ENCODE measurements at regions of chr11 and their contacts with region 1.

Region 1: GRCh38 chr11:34512840-34513681 is 533 bp downstream of the ELF5 start:
- DNase-seq: peak; percentile 74 to 81
- ATAC-seq: peak; percentile 92 to 99
- H3K4me3 ChIP-seq: no peak overlapping the region
- H3K27ac ChIP-seq: peak overlapping the region in 1 of 2 experiments; percentile 52; a peak in 3 of 6 replicates
- H3K4me1 ChIP-seq: no peaks in the 10 kb centered on the region
- CTCF ChIP-seq: peak; percentile 69
- EP300 ChIP-seq: no peak
- POLR2A ChIP-seq: no peak
- RAD21 ChIP-seq: peak; percentile 71 to 74

Region 2: GRCh38 chr11:33920838-33921613 is 592.0 kb before region 1 on chr11:
- CTCF ChIA-PET with region 1: no interaction called
- POLR2A ChIA-PET with region 1: no interaction called
- DNase-seq: no peak
- ATAC-seq: no peak
- H3K4me3 ChIP-seq: no peak overlapping the region
- H3K27ac ChIP-seq: no peak overlapping the region
- H3K4me1 ChIP-seq: no peaks in the 10 kb centered on the region
- CTCF ChIP-seq: no peak
- EP300 ChIP-seq: no peak
- POLR2A ChIP-seq: no peak
- RAD21 ChIP-seq: no peak

Region 3: GRCh38 chr11:34243726-34244464 is 269.2 kb before region 1 on chr11:
- CTCF ChIA-PET with region 1: no interaction called
- POLR2A ChIA-PET with region 1: no interaction called
- DNase-seq: peak; percentile 94
- ATAC-seq: peak; percentile 93 to 94
- H3K4me3 ChIP-seq: no peak overlapping the region
- H3K27ac ChIP-seq: peak overlapping the region; percentile 80 to 92
- H3K4me1 ChIP-seq: peaks cover 75% of the 10 kb centered on the region
- CTCF ChIP-seq: no peak
- EP300 ChIP-seq: peak; percentile 42 to 55; a peak in 2 of 5 replicates
- POLR2A ChIP-seq: no peak
- RAD21 ChIP-seq: peak in 1 of 2 experiments; percentile 46; a peak in 3 of 5 replicates

Region 4: GRCh38 chr11:34344768-34345539 is 168.1 kb before region 1 on chr11:
- CTCF ChIA-PET with region 1: no interaction called
- POLR2A ChIA-PET with region 1: no interaction called
- DNase-seq: peak; percentile 67 to 90
- ATAC-seq: peak; percentile 75
- H3K4me3 ChIP-seq: peak overlapping the region; percentile 9; the same call in 1 of the 3 replicates
- H3K27ac ChIP-seq: peak overlapping the region; percentile 88 to 89
- H3K4me1 ChIP-seq: peaks cover 100% of the 10 kb centered on the region
- CTCF ChIP-seq: no peak
- EP300 ChIP-seq: peak; percentile 71 to 83; a peak in 4 of 5 replicates
- POLR2A ChIP-seq: no peak
- RAD21 ChIP-seq: peak in 1 of 2 experiments; percentile 15; a peak in 3 of 5 replicates

Region 5: GRCh38 chr11:34501500-34501899 is 11.6 kb before region 1 on chr11:
- CTCF ChIA-PET with region 1: interaction called, 89 read pairs
- POLR2A ChIA-PET with region 1: no interaction called
- DNase-seq: peak in 1 of 2 experiments; percentile 46
- ATAC-seq: peak; percentile 63 to 71; a peak in 5 of 6 replicates
- H3K4me3 ChIP-seq: no peak overlapping the region
- H3K27ac ChIP-seq: peak overlapping the region; percentile 64 to 80
- H3K4me1 ChIP-seq: peaks cover 19% of the 10 kb centered on the region
- CTCF ChIP-seq: no peak
- EP300 ChIP-seq: 0 out of 5 replicates have a peak, but pooled peaks of 1 of the 2 experiments have one; percentile 25
- POLR2A ChIP-seq: no peak
- RAD21 ChIP-seq: no peak

Region 6: DNA sequence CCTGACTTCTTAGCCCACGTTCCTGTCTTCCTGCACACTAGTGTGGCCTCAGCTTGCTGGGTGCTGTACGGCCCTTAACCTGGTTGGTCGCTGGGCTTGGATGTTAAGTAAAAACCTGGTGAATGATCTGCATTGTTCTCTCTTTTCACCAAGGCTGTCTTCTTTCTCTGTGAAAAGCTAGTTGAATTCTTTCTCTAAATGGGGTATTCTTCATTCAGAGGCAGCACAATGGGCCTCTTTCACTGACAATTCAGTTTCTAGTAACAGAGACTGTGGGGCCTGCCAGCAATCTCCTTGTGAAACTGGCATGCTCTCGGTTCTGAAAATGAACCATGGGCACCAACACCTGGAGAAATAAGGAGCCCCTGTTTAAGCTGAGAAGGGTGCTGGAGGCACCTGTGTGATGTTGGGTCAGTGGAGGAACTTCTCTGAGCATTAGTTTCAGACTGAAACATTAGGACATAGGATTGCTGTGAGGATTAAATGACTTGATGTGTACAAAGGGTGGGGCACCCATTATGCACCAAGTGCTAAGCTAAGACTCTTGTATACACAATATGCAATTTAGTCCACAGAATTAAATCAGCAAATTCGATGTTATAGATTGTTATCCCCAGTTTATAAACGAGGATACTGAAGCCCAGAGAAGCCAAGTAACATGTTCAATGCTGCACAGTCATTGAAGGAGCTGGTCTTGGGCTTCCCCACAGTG is 33.6 kb after region 1 on chr11:
- CTCF ChIA-PET with region 1: interaction called, 23 read pairs
- POLR2A ChIA-PET with region 1: no interaction called
- DNase-seq: no peak
- ATAC-seq: no peak
- H3K4me3 ChIP-seq: no peak overlapping the region
- H3K27ac ChIP-seq: no peak overlapping the region
- H3K4me1 ChIP-seq: no peaks in the 10 kb centered on the region
- CTCF ChIP-seq: no peak
- EP300 ChIP-seq: no peak
- POLR2A ChIP-seq: no peak
- RAD21 ChIP-seq: no peak

Region 7: GRCh38 chr11:34594603-34595002 is 81.5 kb after region 1 on chr11:
- CTCF ChIA-PET with region 1: no interaction called
- POLR2A ChIA-PET with region 1: no interaction called
- DNase-seq: no peak
- ATAC-seq: no peak
- H3K4me3 ChIP-seq: no peak overlapping the region
- H3K27ac ChIP-seq: peak overlapping the region; percentile 57 to 99
- H3K4me1 ChIP-seq: peaks cover 13% of the 10 kb centered on the region
- CTCF ChIP-seq: no peak
- EP300 ChIP-seq: no peak
- POLR2A ChIP-seq: no peak
- RAD21 ChIP-seq: no peak

Region 8: GRCh38 chr11:34890812-34891211 is 377.8 kb after region 1 on chr11:
- CTCF ChIA-PET with region 1: interaction called, 40 read pairs
- POLR2A ChIA-PET with region 1: no interaction called
- DNase-seq: peak in 1 of 2 experiments; percentile 68
- ATAC-seq: peak in 1 of 2 experiments; percentile 67; a peak in 3 of 6 replicates
- H3K4me3 ChIP-seq: no peak overlapping the region
- H3K27ac ChIP-seq: peak overlapping the region; percentile 71 to 76
- H3K4me1 ChIP-seq: peaks cover 43% of the 10 kb centered on the region
- CTCF ChIP-seq: peak; percentile 81
- EP300 ChIP-seq: no peak
- POLR2A ChIP-seq: no peak
- RAD21 ChIP-seq: peak; percentile 88 to 95